Caco-2 (cell line): ENCODE measurements at regions of chr6 and their contacts with region 1.

Region 1: GRCh38 chr6:136317021-136317694 is 27.5 kb upstream of the BCLAF1 start:
- DNase-seq: peak; percentile 52 to 71
- H3K4me3 ChIP-seq: no peak overlapping the region
- H3K4me3 Mint-ChIP-seq: no peak overlapping the region
- H3K27ac Mint-ChIP-seq: no peak overlapping the region
- H3K4me1 ChIP-seq: no peaks in the 10 kb centered on the region
- H3K4me1 Mint-ChIP-seq: no peaks in the 10 kb centered on the region
- H3K27me3 ChIP-seq: no peaks in the 10 kb centered on the region
- H3K27me3 Mint-ChIP-seq: no peaks in the 10 kb centered on the region
- CTCF ChIP-seq: peak; percentile 75 to 79

Region 2: DNA sequence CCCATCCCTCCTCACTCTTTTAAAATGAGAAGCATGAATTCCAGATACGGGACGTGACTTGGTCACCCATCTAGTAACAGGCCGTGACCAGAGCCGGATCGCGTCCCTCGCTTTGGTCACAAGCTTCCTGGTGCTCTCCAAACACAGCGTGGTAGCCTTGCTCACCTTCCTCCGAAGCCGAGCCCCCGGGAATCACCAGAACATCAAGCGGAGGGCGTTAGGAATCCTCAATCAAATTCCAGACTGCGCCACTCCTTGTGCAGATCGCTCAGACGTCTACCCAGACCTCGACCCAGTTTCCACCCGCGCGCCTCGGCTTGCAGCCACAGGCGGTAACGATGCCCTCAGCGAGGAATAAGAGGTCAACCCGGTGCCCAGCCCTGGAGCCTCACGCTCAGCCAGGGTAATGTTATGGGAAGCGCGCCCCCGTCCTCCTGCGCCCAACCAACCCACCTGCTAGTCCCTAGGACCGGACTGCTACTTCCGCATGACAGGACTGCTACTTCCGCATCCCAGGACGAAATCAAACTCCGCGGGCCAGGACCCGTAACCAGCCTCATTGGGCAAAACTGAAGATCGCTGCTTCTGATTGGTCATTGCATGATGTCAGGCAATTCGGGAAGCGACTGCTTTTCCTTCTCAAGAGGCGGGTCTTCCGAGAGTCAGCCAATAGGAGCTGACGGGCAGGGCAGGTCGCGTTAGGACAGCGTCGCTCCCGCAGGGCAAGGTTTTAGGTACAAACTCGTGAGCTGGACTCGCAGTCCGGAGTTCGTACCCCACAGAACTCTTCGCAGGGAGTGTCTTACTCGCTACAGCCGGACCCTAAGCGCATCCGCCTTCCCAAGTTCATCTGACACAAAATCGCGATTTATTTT is 67.1 kb before region 1 on chr6 and contains the start of gene MTFR2:
- CTCF ChIA-PET with region 1: interaction called, 3 read pairs
- POLR2A ChIA-PET with region 1: interaction called, 11 read pairs
- intact Hi-C with region 1: loop called (anchors 1 kb)
- DNase-seq: peak; percentile 97 to 99
- H3K4me3 ChIP-seq: peak within 1 kb of the TSS; percentile 71
- H3K4me3 Mint-ChIP-seq: peak within 1 kb of the TSS; percentile 97
- H3K27ac Mint-ChIP-seq: peak within 1 kb of the TSS; percentile 98
- H3K4me1 ChIP-seq: peaks cover 9% of the 10 kb centered on the region; the same call in 1 of the 2 replicates
- H3K4me1 Mint-ChIP-seq: peaks cover 23% of the 10 kb centered on the region
- H3K27me3 ChIP-seq: no peaks in the 10 kb centered on the region
- H3K27me3 Mint-ChIP-seq: no peaks in the 10 kb centered on the region
- CTCF ChIP-seq: no peak
- total RNA-seq, gene MTFR2: 15.1 and 18.5 TPM in 2 replicates

Region 3: GRCh38 chr6:136647363-136647852 is 330.2 kb after region 1 on chr6:
- CTCF ChIA-PET with region 1: no interaction called
- POLR2A ChIA-PET with region 1: no interaction called
- intact Hi-C with region 1: no loop called
- DNase-seq: no peak
- H3K4me3 ChIP-seq: no peak overlapping the region
- H3K4me3 Mint-ChIP-seq: no peak overlapping the region
- H3K27ac Mint-ChIP-seq: no peak overlapping the region
- H3K4me1 ChIP-seq: peaks cover 5% of the 10 kb centered on the region; the same call in 1 of the 2 replicates
- H3K4me1 Mint-ChIP-seq: no peaks in the 10 kb centered on the region
- H3K27me3 ChIP-seq: no peaks in the 10 kb centered on the region
- H3K27me3 Mint-ChIP-seq: no peaks in the 10 kb centered on the region
- CTCF ChIP-seq: no peak